ENCODE measurements at regions of chr3 and their contacts with region 1.

Region 1: DNA sequence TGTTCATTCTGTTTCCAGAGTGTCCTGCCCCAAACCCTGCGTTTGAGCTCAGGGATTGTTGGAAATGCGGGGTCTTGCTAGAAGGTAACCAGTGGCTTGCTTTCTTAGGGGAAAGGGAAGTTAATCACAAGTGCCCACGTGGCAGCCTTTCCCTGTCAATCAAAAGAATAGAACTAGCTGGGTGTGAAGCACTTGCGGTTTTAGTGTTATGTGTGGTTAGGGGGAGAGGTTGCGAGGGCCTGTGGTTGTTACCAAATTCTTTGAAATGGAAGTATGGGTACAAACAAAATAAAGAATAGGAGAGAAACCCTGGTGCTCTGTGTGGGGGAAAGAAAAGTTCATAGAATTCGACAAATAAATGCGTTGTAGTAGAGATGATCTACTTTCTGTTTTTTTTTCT is 67.6 kb downstream of the FNDC3B start:
- DNase-seq: peak; percentile 79
- H3K4me3 Mint-ChIP-seq: peak overlapping the region; percentile 52
- H3K27ac Mint-ChIP-seq: peak overlapping the region; percentile 84
- H3K4me1 Mint-ChIP-seq: peaks cover 72% of the 10 kb centered on the region
- H3K27me3 Mint-ChIP-seq: no peaks in the 10 kb centered on the region

Region 2: GRCh38 chr3:171846597-171846996 is 260.4 kb before region 1 on chr3:
- CTCF ChIA-PET with region 1: no interaction called
- intact Hi-C with region 1: loop called (anchors 1 kb)
- DNase-seq: peak; percentile 32
- H3K4me3 Mint-ChIP-seq: no peak overlapping the region
- H3K27ac Mint-ChIP-seq: no peak overlapping the region
- H3K4me1 Mint-ChIP-seq: peaks cover 18% of the 10 kb centered on the region
- H3K27me3 Mint-ChIP-seq: peaks cover 1% of the 10 kb centered on the region

Region 3: GRCh38 chr3:172065967-172066762 is 40.8 kb before region 1 on chr3:
- CTCF ChIA-PET with region 1: no interaction called
- intact Hi-C with region 1: loop called (anchors 2 kb)
- DNase-seq: no peak
- H3K4me3 Mint-ChIP-seq: no peak overlapping the region
- H3K27ac Mint-ChIP-seq: no peak overlapping the region
- H3K4me1 Mint-ChIP-seq: peaks cover 36% of the 10 kb centered on the region
- H3K27me3 Mint-ChIP-seq: no peaks in the 10 kb centered on the region

Region 4: GRCh38 chr3:172138795-172139441 is 31.9 kb after region 1 on chr3:
- CTCF ChIA-PET with region 1: interaction called, 5 read pairs
- intact Hi-C with region 1: loop called (anchors 1 kb)
- DNase-seq: peak; percentile 62
- H3K4me3 Mint-ChIP-seq: no peak overlapping the region
- H3K27ac Mint-ChIP-seq: no peak overlapping the region
- H3K4me1 Mint-ChIP-seq: peaks cover 38% of the 10 kb centered on the region
- H3K27me3 Mint-ChIP-seq: no peaks in the 10 kb centered on the region

Region 5: DNA sequence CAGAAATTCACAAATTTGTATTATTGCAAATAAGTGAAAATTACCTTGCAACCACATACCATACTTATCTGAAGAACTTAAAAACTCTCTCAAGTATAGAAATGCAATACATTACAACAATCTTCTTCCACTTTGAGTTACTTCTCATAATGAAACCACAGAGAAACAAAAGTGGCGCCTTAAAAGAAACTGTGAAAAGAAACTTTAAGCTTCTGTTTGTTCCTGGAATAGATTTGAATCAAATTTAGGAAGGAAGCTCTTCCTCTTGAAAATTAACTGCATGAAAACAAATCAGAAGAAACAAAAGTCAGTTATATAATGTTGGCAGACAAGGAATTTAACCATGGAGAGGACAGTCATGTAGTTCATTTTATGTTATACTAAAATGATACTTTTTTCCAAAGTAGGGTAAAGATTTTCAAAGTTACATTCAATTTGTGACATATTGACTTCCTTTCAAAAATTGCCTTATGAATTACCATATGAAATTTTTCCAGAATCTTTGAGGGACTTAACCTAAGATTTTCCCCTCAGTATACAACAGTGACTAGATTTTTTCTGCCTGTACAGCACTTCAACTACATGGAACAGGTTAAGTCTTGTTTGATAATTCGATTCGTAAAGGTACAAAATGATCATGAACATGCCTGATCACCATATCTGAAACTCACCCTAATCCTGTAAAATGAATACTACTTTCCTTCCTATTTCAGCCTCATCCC is 473.9 kb after region 1 on chr3:
- CTCF ChIA-PET with region 1: no interaction called
- intact Hi-C with region 1: loop called (anchors 5 kb)
- DNase-seq: no peak
- H3K4me3 Mint-ChIP-seq: peak overlapping the region; percentile 22
- H3K27ac Mint-ChIP-seq: peak overlapping the region; percentile 85
- H3K4me1 Mint-ChIP-seq: peaks cover 85% of the 10 kb centered on the region
- H3K27me3 Mint-ChIP-seq: no peaks in the 10 kb centered on the region

Region 6: DNA sequence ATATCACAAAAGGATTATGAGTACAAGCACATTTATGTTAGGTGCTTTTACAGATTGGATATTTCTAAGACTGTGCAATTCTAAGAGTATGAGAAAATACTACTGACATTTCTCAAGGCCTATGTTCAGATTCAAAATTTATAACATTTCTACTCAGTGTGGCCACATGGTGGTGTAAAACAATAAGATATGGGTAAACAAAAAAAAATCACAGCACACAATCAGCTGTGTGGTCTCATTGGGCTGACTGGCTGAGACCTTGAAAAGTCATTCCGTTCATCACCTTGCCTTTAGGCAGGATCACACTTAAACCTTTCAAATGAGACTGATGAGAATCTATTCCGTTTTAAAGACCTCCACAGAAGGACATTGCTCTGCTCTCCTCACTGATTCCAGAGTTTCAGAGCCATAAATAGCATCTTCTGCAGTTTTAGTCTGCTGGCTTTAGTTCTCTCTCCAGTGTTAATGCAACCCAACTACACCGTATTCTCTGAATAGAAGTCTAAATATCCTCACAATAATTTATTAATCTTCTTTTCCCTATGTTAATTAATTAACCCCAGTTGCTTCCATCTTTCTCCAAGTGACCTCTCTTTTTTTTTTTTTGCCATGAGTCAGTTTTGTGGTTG is 875.9 kb after region 1 on chr3:
- CTCF ChIA-PET with region 1: no interaction called
- intact Hi-C with region 1: no loop called
- DNase-seq: no peak
- H3K4me3 Mint-ChIP-seq: no peak overlapping the region
- H3K27ac Mint-ChIP-seq: no peak overlapping the region
- H3K4me1 Mint-ChIP-seq: no peaks in the 10 kb centered on the region
- H3K27me3 Mint-ChIP-seq: no peaks in the 10 kb centered on the region

Measured in activated naive CD4-positive, alpha-beta T cell treated with anti-CD3 and anti-CD28 coated beads for 36 hours (primary cell).